T-cell (primary cell): ENCODE measurements at regions of chr17 and their contacts with region 1.

Region 1: GRCh38 chr17:62065598-62066468 is 755 bp upstream of the MED13 start:
- DNase-seq: peak; percentile 95 to 100 (median 98)
- ATAC-seq: peak; percentile 94 to 95 (median 94)
- H3K4me3 ChIP-seq: peak overlapping the region; percentile 100
- H3K4me3 Mint-ChIP-seq: peak overlapping the region; percentile 95 to 98 (median 97)
- H3K27ac ChIP-seq: peak overlapping the region; percentile 100
- H3K27ac Mint-ChIP-seq: peak overlapping the region; percentile 95 to 98
- H3K4me1 ChIP-seq: peaks cover 12 to 26% of the 10 kb centered on the region in 2 experiments
- H3K4me1 Mint-ChIP-seq: peaks cover 31 to 36% (median 33%) of the 10 kb centered on the region in 3 donors
- H3K27me3 ChIP-seq: no peaks in the 10 kb centered on the region
- H3K27me3 Mint-ChIP-seq: no peaks in the 10 kb centered on the region

Region 2: DNA sequence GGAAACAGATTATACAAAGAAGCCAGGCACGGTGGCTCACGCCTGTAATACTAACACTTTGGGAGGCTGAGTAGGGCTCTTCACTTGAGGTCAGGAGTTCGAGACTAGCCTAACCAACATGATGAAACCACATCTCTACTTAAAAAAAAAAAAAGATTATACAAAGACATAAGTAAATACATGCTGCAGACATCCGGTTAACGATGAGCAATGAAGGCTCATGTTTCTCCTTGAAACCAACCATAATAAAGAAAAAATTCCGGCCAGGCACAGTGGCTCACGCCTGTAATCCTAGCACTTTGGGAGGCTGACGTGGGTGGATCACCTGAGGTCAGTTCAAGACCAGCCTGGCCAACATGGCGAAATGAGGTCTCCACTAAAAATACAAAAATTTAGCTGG is 182.6 kb before region 1 on chr17:
- CTCF ChIA-PET with region 1: no interaction called
- POLR2A ChIA-PET with region 1: no interaction called
- DNase-seq: no peak
- ATAC-seq: no peak
- H3K4me3 ChIP-seq: no peak overlapping the region
- H3K4me3 Mint-ChIP-seq: no peak overlapping the region
- H3K27ac ChIP-seq: no peak overlapping the region
- H3K27ac Mint-ChIP-seq: no peak overlapping the region
- H3K4me1 ChIP-seq: no peaks in the 10 kb centered on the region
- H3K4me1 Mint-ChIP-seq: no peaks in the 10 kb centered on the region
- H3K27me3 ChIP-seq: no peaks in the 10 kb centered on the region
- H3K27me3 Mint-ChIP-seq: no peaks in the 10 kb centered on the region

Region 3: GRCh38 chr17:62052757-62053338 is 13.0 kb before region 1 on chr17:
- CTCF ChIA-PET with region 1: interaction called in 1 of 2 experiments, 14 read pairs
- POLR2A ChIA-PET with region 1: interaction called in 1 of 2 experiments, 4 read pairs
- DNase-seq: no peak
- ATAC-seq: no peak
- H3K4me3 ChIP-seq: no peak overlapping the region
- H3K4me3 Mint-ChIP-seq: no peak overlapping the region
- H3K27ac ChIP-seq: no peak overlapping the region
- H3K27ac Mint-ChIP-seq: peak overlapping the region in 1 of 2 donors; percentile 16
- H3K4me1 ChIP-seq: peaks cover 8 to 11% of the 10 kb centered on the region in 2 experiments
- H3K4me1 Mint-ChIP-seq: peaks cover 67 to 80% (median 73%) of the 10 kb centered on the region in 3 donors
- H3K27me3 ChIP-seq: no peaks in the 10 kb centered on the region
- H3K27me3 Mint-ChIP-seq: no peaks in the 10 kb centered on the region